ENCODE measurements at regions of chr14 and their contacts with region 1.

Region 1: DNA sequence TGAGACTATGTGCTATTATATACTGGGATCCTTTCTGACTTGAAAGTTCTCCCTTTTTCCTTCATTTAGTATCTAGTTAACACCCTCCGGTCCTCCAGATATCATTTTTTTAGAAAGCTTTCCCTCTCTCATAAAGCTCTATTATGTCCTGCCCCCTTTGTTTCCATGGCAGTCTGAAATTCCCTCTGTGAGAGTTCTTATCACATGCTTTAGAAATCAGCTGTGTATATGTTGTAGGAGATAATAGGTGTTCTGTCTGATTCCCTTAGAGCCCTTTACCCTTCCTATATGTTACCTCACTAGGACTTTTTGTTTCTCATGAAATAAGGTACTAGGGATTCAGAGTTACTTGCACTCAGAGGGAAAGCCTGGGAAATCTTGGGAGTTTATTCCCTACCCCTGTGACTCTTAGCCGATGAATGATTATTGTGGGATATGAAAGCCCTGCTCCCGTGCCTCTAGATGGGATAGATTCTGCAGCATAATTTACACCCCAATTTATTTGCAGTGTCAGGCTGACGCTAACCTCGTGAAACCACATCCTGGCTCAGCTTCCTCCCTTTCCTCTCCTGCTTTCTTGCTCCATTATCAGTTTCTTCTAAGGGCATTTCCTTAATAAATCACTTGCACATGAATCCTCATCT is 448.4 kb downstream of the MDGA2 start:
- DNase-seq: no peak
- ATAC-seq: no peak; the same call in 1 of the 2 replicates
- H3K4me3 ChIP-seq: no peak overlapping the region
- H3K27ac ChIP-seq: no peak overlapping the region
- H3K4me1 ChIP-seq: no peaks in the 10 kb centered on the region
- H3K27me3 ChIP-seq: peaks cover 16% of the 10 kb centered on the region
- CTCF ChIP-seq: no peak

Region 2: DNA sequence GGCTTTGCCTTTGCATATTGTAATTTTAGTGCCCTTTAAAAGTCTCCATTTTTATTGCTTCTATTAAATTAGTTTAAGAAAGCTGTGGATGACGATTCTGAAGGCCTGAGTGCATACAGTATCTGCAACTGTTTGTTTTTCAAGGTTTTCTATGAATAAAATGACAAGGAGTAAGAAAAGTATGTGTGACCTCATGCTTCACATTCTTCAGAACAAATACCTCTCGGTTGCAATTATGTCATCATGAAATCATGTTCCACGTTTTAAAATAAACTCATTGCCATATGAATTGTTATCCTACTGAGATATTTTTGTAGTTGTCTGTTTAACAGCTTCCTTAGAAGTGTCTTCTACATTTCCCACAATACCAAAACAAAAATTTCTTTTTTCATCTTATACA is 73.8 kb after region 1 on chr14:
- CTCF ChIA-PET with region 1: no interaction called
- POLR2A ChIA-PET with region 1: interaction called, 17 read pairs
- intact Hi-C with region 1: no loop called
- DNase-seq: no peak
- ATAC-seq: no peak
- H3K4me3 ChIP-seq: no peak overlapping the region
- H3K27ac ChIP-seq: no peak overlapping the region
- H3K4me1 ChIP-seq: no peaks in the 10 kb centered on the region
- H3K27me3 ChIP-seq: peaks cover 12% of the 10 kb centered on the region; the same call in 1 of the 2 replicates
- CTCF ChIP-seq: no peak